PC-3 (cell line): ENCODE measurements at regions of chr10 and their contacts with region 1.

Region 1: DNA sequence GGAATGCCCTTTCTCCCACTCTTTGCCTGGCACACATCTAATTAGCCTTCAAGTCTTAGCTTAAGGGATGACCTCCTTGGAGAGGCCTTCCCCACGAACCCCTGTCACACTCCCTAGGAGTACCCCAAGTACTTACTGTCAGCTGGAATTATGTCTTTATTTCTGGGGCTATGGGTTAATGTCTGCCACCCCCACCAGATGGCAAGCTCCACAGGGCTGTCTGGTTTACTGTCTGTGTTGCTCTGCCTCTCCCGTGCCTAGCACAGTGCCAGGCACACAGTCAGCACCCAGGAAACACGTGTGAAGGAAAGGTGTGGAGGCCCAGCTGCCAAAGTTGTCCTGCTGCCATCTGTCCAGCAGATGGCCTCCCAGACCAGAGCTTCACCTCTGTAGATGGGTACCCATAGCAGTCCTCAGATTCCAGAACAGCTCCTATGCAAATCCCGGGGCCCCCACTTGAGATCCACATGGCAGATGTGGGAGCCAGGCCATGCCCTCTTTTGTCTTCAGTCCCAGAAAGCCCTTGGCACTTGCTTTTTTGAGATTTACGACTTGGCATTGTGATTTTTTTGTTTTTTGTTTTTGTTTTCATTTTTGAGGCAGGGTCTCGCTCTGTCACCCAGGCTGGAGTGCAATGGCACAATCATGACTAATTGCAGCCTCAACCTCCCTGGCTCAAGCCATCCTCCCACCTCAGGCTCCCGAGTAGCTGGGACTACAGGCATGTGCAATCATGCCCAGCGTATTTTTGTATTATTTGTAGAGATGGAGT is 17.2 kb upstream of the PALD1 start:
- DNase-seq: peak; percentile 89
- ATAC-seq: peak; percentile 65
- H3K4me3 ChIP-seq: no peak overlapping the region
- H3K27ac ChIP-seq: no peak overlapping the region
- H3K4me1 ChIP-seq: peaks cover 27% of the 10 kb centered on the region
- H3K27me3 ChIP-seq: 0 out of 2 replicates have a peak, but pooled peaks cover 1% of the 10 kb centered on the region
- CTCF ChIP-seq: peak; percentile 99

Region 2: GRCh38 chr10:70331486-70332268 is 129.7 kb before region 1 on chr10:
- CTCF ChIA-PET with region 1: no interaction called
- POLR2A ChIA-PET with region 1: interaction called, 17 read pairs
- intact Hi-C with region 1: no loop called
- DNase-seq: peak; percentile 99
- ATAC-seq: peak; percentile 81
- H3K4me3 ChIP-seq: no peak overlapping the region
- H3K27ac ChIP-seq: 0 out of 2 replicates have a peak overlapping the region, but pooled peaks have one; percentile 1
- H3K4me1 ChIP-seq: peaks cover 22% of the 10 kb centered on the region
- H3K27me3 ChIP-seq: no peaks in the 10 kb centered on the region
- CTCF ChIP-seq: peak; percentile 57

Region 3: GRCh38 chr10:70540089-70540788 is 78.8 kb after region 1 on chr10:
- CTCF ChIA-PET with region 1: interaction called, 14 read pairs
- POLR2A ChIA-PET with region 1: no interaction called
- intact Hi-C with region 1: loop called (anchors 1 kb)
- DNase-seq: peak; percentile 69
- ATAC-seq: peak; percentile 66
- H3K4me3 ChIP-seq: no peak overlapping the region
- H3K27ac ChIP-seq: no peak overlapping the region
- H3K4me1 ChIP-seq: peaks cover 7% of the 10 kb centered on the region; the same call in 1 of the 2 replicates
- H3K27me3 ChIP-seq: no peaks in the 10 kb centered on the region
- CTCF ChIP-seq: peak; percentile 100

Region 4: DNA sequence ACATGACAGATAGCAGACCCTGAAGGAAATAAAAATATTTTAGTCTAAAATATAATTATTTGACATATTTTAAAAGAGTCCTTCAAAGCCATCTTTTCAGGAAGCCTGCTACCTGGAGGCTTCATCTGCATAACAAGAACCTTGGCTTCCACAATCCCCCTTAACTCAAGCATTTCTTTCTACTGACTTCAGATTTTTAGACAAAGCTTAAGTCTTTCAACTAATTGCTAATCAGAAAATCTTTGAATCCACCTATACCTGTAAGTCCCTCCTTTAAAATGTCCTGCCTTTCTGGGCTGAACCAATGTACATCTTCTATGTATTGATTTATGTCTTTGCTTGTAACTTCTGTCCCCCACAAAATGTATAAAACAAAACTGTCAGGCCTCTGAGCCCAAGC is 164.7 kb after region 1 on chr10:
- CTCF ChIA-PET with region 1: no interaction called
- POLR2A ChIA-PET with region 1: no interaction called
- intact Hi-C with region 1: no loop called
- DNase-seq: no peak
- ATAC-seq: no peak
- H3K4me3 ChIP-seq: no peak overlapping the region
- H3K27ac ChIP-seq: no peak overlapping the region
- H3K4me1 ChIP-seq: no peaks in the 10 kb centered on the region
- H3K27me3 ChIP-seq: no peaks in the 10 kb centered on the region
- CTCF ChIP-seq: no peak